Transverse colon (tissue), 4 donors: ENCODE measurements at regions of chr6 and their contacts with region 1.

Region 1: GRCh38 chr6:108592371-108593337 is 31.9 kb downstream of the FOXO3 start:
- DNase-seq: peak; percentile 70
- H3K4me3 ChIP-seq: no peak overlapping the region
- H3K27ac ChIP-seq: peak overlapping the region; percentile 86 to 91 (median 89)
- H3K4me1 ChIP-seq: peaks cover 77 to 99% (median 90%) of the 10 kb centered on the region in 4 donors
- H3K27me3 ChIP-seq: no peaks in the 10 kb centered on the region
- CTCF ChIP-seq: no peak
- EP300 ChIP-seq: peak; percentile 46
- POLR2A ChIP-seq: no peak

Region 2: GRCh38 chr6:107021446-107022185 is 1571.0 kb before region 1 on chr6:
- in situ Hi-C with region 1: no loop called
- intact Hi-C with region 1: no loop called
- DNase-seq: no peak
- H3K4me3 ChIP-seq: no peak overlapping the region
- H3K27ac ChIP-seq: no peak overlapping the region
- H3K4me1 ChIP-seq: no peaks in the 10 kb centered on the region
- H3K27me3 ChIP-seq: no peaks in the 10 kb centered on the region
- CTCF ChIP-seq: no peak
- EP300 ChIP-seq: no peak
- POLR2A ChIP-seq: no peak

Region 3: GRCh38 chr6:108286366-108286765 is 306.3 kb before region 1 on chr6:
- in situ Hi-C with region 1: no loop called
- intact Hi-C with region 1: no loop called
- DNase-seq: no peak
- H3K4me3 ChIP-seq: no peak overlapping the region
- H3K27ac ChIP-seq: no peak overlapping the region
- H3K4me1 ChIP-seq: no peaks in the 10 kb centered on the region
- H3K27me3 ChIP-seq: no peaks in the 10 kb centered on the region
- CTCF ChIP-seq: no peak
- EP300 ChIP-seq: no peak
- POLR2A ChIP-seq: no peak

Region 4: GRCh38 chr6:108558372-108559096 is 34.1 kb before region 1 on chr6:
- in situ Hi-C with region 1: no loop called
- intact Hi-C with region 1: loop called (anchors 2 kb)
- DNase-seq: peak; percentile 99
- H3K4me3 ChIP-seq: peak overlapping the region; percentile 72 to 98 (median 88)
- H3K27ac ChIP-seq: peak overlapping the region; percentile 98 to 100 (median 99)
- H3K4me1 ChIP-seq: peaks cover 8 to 39% (median 24%) of the 10 kb centered on the region in 4 donors
- H3K27me3 ChIP-seq: no peaks in the 10 kb centered on the region
- CTCF ChIP-seq: no peak
- EP300 ChIP-seq: peak; percentile 77
- POLR2A ChIP-seq: no peak

Region 5: DNA sequence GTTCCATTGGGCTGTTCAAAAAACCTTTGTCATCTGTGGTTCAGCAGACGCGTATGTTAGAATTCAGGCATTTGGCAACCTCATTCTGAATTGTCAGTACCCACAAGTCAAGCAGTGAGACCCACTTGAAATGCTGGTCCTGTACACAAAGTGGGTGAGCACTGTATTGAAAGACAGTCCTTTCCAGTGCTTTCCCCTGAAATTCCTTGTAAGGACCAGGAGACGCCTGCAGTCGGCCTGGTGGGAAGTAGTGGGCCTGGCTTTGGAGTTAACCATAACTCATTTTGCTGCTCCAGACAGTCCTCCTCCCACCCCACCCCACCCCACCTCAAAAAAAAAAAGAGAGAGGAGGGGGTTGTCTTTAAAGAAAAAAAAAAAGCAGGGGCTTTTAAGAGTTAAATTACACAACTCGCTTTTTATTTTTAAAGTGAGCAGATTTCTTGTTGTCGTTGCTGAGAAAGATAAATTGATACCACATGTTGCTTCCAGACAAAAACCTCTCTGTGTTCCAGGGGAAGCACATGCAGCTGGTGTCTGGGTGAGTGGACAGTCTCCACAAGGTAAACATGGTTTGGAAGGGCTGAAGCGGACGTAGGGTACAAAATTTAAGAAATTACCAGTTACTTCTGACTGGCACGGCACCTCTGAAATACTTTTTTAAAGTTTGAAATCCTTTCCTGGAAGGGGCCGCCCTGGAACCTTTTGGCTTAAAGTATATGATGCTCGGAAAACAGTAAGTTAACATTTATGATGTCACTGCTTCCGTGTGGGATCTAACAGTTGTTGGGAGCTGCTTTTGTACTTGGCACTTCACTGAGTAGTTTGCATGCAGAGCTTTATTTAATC is 63.4 kb after region 1 on chr6:
- in situ Hi-C with region 1: no loop called
- intact Hi-C with region 1: loop called (anchors 10 kb)
- DNase-seq: no peak
- H3K4me3 ChIP-seq: peak overlapping the region in 1 of 4 donors; percentile 10
- H3K27ac ChIP-seq: peak overlapping the region; percentile 70 to 87 (median 82)
- H3K4me1 ChIP-seq: peaks cover 39 to 85% (median 54%) of the 10 kb centered on the region in 4 donors
- H3K27me3 ChIP-seq: no peaks in the 10 kb centered on the region
- CTCF ChIP-seq: no peak
- EP300 ChIP-seq: peak; percentile 60
- POLR2A ChIP-seq: no peak